T-cell (primary cell): ENCODE measurements at regions of chr16 and their contacts with region 1.

Region 1: GRCh38 chr16:10391339-10391738 is 5.5 kb downstream of the ATF7IP2 start:
- DNase-seq: no peak
- ATAC-seq: no peak
- H3K4me3 ChIP-seq: no peak overlapping the region
- H3K4me3 Mint-ChIP-seq: peak overlapping the region in 1 of 3 donors; percentile 53
- H3K27ac ChIP-seq: no peak overlapping the region
- H3K27ac Mint-ChIP-seq: peak overlapping the region in 1 of 2 donors; percentile 28
- H3K4me1 ChIP-seq: peaks cover 19 to 27% of the 10 kb centered on the region in 2 experiments
- H3K4me1 Mint-ChIP-seq: peaks cover 63 to 68% (median 67%) of the 10 kb centered on the region in 3 donors
- H3K27me3 ChIP-seq: no peaks in the 10 kb centered on the region
- H3K27me3 Mint-ChIP-seq: no peaks in the 10 kb centered on the region

Region 2: GRCh38 chr16:10504404-10504885 is 113.1 kb after region 1 on chr16:
- CTCF ChIA-PET with region 1: no interaction called
- POLR2A ChIA-PET with region 1: interaction called in 1 of 2 experiments, 11 read pairs
- DNase-seq: no peak
- ATAC-seq: peak in 1 of 4 experiments; percentile 29
- H3K4me3 ChIP-seq: no peak overlapping the region
- H3K4me3 Mint-ChIP-seq: no peak overlapping the region
- H3K27ac ChIP-seq: no peak overlapping the region
- H3K27ac Mint-ChIP-seq: peak overlapping the region in 1 of 2 donors; percentile 23
- H3K4me1 ChIP-seq: no peaks in the 10 kb centered on the region
- H3K4me1 Mint-ChIP-seq: peaks cover 6 to 13% (median 8%) of the 10 kb centered on the region in 3 donors
- H3K27me3 ChIP-seq: no peaks in the 10 kb centered on the region
- H3K27me3 Mint-ChIP-seq: peaks cover 0 to 2% of the 10 kb centered on the region in 2 donors

Region 3: GRCh38 chr16:10652730-10653590 is 261.6 kb after region 1 on chr16:
- CTCF ChIA-PET with region 1: no interaction called
- POLR2A ChIA-PET with region 1: no interaction called
- DNase-seq: no peak
- ATAC-seq: no peak
- H3K4me3 ChIP-seq: no peak overlapping the region
- H3K4me3 Mint-ChIP-seq: no peak overlapping the region
- H3K27ac ChIP-seq: no peak overlapping the region
- H3K27ac Mint-ChIP-seq: no peak overlapping the region
- H3K4me1 ChIP-seq: no peaks in the 10 kb centered on the region
- H3K4me1 Mint-ChIP-seq: no peaks in the 10 kb centered on the region
- H3K27me3 ChIP-seq: peaks cover 0 to 3% of the 10 kb centered on the region in 2 experiments
- H3K27me3 Mint-ChIP-seq: no peaks in the 10 kb centered on the region